Left ventricle myocardium inferior (tissue), 1 donor: ENCODE measurements at regions of chr1 and their contacts with region 1.

Region 1: DNA sequence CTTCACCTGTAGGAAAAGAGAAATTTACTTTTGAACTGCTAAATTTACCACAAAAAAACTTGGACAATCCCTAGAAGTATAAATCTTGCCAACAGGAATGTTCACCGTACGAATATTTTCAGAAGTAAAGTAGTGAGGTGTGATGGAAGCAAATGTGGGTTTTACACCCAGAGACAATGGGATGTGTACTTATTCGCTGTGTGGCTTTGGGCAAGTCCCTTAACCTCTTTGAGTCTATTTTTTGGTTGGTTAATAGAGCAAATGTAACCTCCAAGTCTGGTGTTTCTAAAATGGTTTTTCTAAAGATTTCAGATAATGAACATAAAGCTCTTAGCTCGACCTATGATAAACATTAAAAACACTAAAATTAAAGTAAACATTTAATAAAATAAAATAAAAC is 51.2 kb downstream of the TPR start:
- DNase-seq: no peak
- H3K4me3 ChIP-seq: no peak overlapping the region
- H3K27ac ChIP-seq: no peak overlapping the region
- H3K4me1 ChIP-seq: no peaks in the 10 kb centered on the region
- H3K27me3 ChIP-seq: no peaks in the 10 kb centered on the region
- CTCF ChIP-seq: no peak

Region 2: GRCh38 chr1:186218654-186219352 is 105.1 kb before region 1 on chr1:
- intact Hi-C with region 1: no loop called
- DNase-seq: no peak
- H3K4me3 ChIP-seq: no peak overlapping the region
- H3K27ac ChIP-seq: no peak overlapping the region
- H3K4me1 ChIP-seq: no peaks in the 10 kb centered on the region
- H3K27me3 ChIP-seq: no peaks in the 10 kb centered on the region
- CTCF ChIP-seq: no peak

Region 3: GRCh38 chr1:186363891-186364290 is 40.0 kb after region 1 on chr1:
- intact Hi-C with region 1: loop called (anchors 5 kb)
- DNase-seq: no peak
- H3K4me3 ChIP-seq: no peak overlapping the region
- H3K27ac ChIP-seq: no peak overlapping the region
- H3K4me1 ChIP-seq: peaks cover 9% of the 10 kb centered on the region
- H3K27me3 ChIP-seq: no peaks in the 10 kb centered on the region
- CTCF ChIP-seq: no peak